Body of pancreas (tissue), 4 donors: ENCODE measurements at regions of chr19 and their contacts with region 1.

Region 1: GRCh38 chr19:47682939-47683338 is 30.3 kb upstream of the EHD2 start:
- DNase-seq: no peak
- ATAC-seq: no peak
- H3K4me3 ChIP-seq: no peak overlapping the region
- H3K27ac ChIP-seq: no peak overlapping the region
- H3K4me1 ChIP-seq: no peaks in the 10 kb centered on the region
- H3K27me3 ChIP-seq: no peaks in the 10 kb centered on the region
- CTCF ChIP-seq: no peak
- POLR2A ChIP-seq: no peak

Region 2: GRCh38 chr19:47523473-47523872 is 159.5 kb before region 1 on chr19:
- intact Hi-C with region 1: loop called (anchors 10 kb)
- DNase-seq: no peak
- ATAC-seq: no peak
- H3K4me3 ChIP-seq: no peak overlapping the region
- H3K27ac ChIP-seq: no peak overlapping the region
- H3K4me1 ChIP-seq: no peaks in the 10 kb centered on the region
- H3K27me3 ChIP-seq: no peaks in the 10 kb centered on the region
- CTCF ChIP-seq: no peak
- POLR2A ChIP-seq: no peak

Region 3: GRCh38 chr19:47865166-47865565 is 182.2 kb after region 1 on chr19:
- intact Hi-C with region 1: no loop called
- DNase-seq: no peak
- ATAC-seq: no peak
- H3K4me3 ChIP-seq: no peak overlapping the region
- H3K27ac ChIP-seq: no peak overlapping the region
- H3K4me1 ChIP-seq: no peaks in the 10 kb centered on the region
- H3K27me3 ChIP-seq: no peaks in the 10 kb centered on the region
- CTCF ChIP-seq: no peak
- POLR2A ChIP-seq: no peak